ENCODE measurements at regions of chr7 and their contacts with region 1.

Region 1: DNA sequence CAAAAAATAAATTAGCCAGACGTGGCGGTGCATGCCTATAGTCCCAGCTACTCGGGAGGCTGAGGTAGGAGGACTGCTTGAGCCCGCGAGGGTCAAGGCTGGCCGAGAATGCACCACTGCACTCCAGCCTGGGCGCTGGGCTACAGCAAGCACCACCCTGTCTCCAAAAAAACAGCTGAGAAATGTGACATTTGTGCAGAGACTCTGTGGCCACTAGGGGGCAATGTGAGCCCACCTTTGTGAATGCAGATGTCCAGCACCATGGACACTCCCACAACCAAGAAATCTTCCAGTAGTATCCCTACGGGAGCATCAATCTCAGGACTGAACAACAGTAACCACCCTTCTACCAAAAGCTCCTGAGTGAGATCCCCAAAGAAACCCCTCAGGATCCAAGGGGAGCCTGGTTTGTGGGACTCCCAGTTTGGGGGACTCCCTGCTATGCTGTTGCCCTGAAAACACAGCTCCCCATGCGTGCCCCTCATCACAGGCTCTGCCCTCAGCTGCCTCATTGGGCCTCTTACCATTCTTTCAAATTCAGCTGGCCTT is 6.2 kb upstream of the AHCYL2 start:
- DNase-seq: no peak
- H3K4me3 ChIP-seq: no peak overlapping the region
- CTCF ChIP-seq: peak; percentile 86

Region 2: DNA sequence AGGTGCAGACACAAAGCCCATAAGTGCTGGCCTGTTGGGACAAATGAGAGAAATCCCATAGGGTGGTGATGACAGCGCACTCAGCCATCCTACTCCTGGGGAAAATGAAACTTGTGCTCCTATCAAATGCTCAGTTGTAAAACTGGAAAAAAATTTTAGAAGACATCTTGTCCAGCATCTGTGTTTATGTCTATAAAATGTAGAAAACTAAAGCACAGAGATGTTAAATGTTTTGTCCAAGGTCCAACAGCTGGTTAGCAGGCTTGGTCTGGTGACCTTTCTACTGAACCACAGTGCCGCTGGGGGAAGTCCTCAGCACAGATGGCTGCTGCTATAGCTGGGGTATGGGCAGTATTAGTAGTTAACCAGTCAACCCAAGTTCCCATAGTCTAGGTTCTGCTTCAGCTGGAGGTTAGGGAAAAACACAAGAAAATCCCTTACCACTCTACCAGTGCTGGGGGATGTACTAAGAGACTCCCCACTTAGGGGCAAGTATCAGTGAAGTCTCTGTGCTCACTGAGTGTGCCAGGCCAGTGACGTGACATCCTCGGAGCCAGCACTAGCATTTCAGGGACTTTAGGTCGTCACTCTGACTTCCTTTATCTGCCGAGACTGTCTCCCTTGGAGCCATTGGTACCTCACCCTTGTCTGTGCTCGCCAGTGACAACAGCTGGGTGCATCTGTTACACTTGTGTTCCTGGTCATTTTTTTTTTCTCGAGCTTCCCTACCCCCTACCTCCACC is 72.2 kb before region 1 on chr7:
- CTCF ChIA-PET with region 1: no interaction called
- POLR2A ChIA-PET with region 1: no interaction called
- DNase-seq: no peak
- H3K4me3 ChIP-seq: no peak overlapping the region
- CTCF ChIP-seq: no peak

Region 3: GRCh38 chr7:129188372-129188891 is 30.2 kb before region 1 on chr7 and contains the start of gene SMO:
- CTCF ChIA-PET with region 1: interaction called, 10 read pairs
- POLR2A ChIA-PET with region 1: no interaction called
- DNase-seq: no peak
- H3K4me3 ChIP-seq: peak within 1 kb of the TSS; percentile 77
- CTCF ChIP-seq: no peak

Region 4: GRCh38 chr7:129271500-129272355 is 53.1 kb after region 1 on chr7:
- CTCF ChIA-PET with region 1: interaction called, 82 read pairs
- POLR2A ChIA-PET with region 1: no interaction called
- DNase-seq: no peak
- H3K4me3 ChIP-seq: no peak overlapping the region
- CTCF ChIP-seq: peak; percentile 59

Region 5: GRCh38 chr7:129343099-129343700 is 124.6 kb after region 1 on chr7:
- CTCF ChIA-PET with region 1: interaction called, 26 read pairs
- POLR2A ChIA-PET with region 1: no interaction called
- DNase-seq: no peak
- H3K4me3 ChIP-seq: no peak overlapping the region
- CTCF ChIP-seq: peak; percentile 48

Region 6: DNA sequence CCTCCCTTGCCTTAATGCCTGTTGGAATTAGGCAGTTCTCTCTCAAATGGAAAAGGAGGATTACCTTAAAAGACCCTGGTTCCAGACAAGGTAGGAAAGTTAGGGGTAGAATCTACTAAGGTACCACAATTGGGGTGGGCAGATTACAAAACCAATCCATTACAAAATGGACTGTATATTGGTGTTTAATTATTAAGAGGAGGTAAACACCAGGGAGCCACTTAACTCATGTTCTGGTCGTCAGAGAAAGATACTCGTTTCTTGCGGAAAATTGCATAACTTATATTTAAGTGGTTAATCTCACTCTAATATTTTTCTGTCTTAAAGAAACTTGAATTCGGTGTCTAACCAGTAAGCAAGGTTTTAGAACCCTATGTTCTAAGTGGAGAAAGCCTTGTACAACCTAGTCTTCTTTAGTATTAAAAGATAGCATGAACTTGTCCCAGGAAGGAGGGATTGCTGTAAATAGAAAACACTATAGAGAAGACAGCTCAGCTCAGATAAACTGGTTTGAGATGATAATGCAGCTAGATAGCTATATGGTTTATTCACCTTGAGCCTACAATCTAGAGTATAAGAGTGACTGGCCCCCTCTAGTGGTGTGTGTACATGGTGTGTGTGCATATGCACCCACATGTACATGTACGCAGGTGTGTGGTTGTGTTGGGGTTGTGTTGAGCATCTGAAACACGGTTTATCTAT is 157.6 kb after region 1 on chr7:
- CTCF ChIA-PET with region 1: interaction called, 32 read pairs
- POLR2A ChIA-PET with region 1: no interaction called
- DNase-seq: no peak
- H3K4me3 ChIP-seq: no peak overlapping the region
- CTCF ChIP-seq: peak; percentile 47

Region 7: GRCh38 chr7:129635300-129636029 is 416.9 kb after region 1 on chr7:
- CTCF ChIA-PET with region 1: interaction called, 13 read pairs
- POLR2A ChIA-PET with region 1: no interaction called
- DNase-seq: no peak
- H3K4me3 ChIP-seq: no peak overlapping the region
- CTCF ChIP-seq: peak; percentile 88